CD4-positive, alpha-beta T cell (primary cell): ENCODE measurements at regions of chr3 and their contacts with region 1.

Region 1: GRCh38 chr3:52406231-52406661 is 38.7 kb downstream of the SEMA3G start:
- DNase-seq: peak in 2 of 14 experiments; percentile 1 to 7
- ATAC-seq: no peak
- H3K4me3 ChIP-seq: no peak overlapping the region
- H3K4me3 Mint-ChIP-seq: peak overlapping the region; percentile 38
- H3K27ac ChIP-seq: no peak overlapping the region
- H3K27ac Mint-ChIP-seq: no peak overlapping the region
- H3K4me1 ChIP-seq: peaks cover 39% of the 10 kb centered on the region
- H3K4me1 Mint-ChIP-seq: peaks cover 22% of the 10 kb centered on the region
- H3K27me3 ChIP-seq: no peaks in the 10 kb centered on the region
- H3K27me3 Mint-ChIP-seq: no peaks in the 10 kb centered on the region
- CTCF ChIP-seq: no peak

Region 2: GRCh38 chr3:52197842-52198668 is 208.2 kb before region 1 on chr3 and contains the start of gene ALAS1:
- CTCF ChIA-PET with region 1: no interaction called
- POLR2A ChIA-PET with region 1: no interaction called
- intact Hi-C with region 1: loop called in 1 of 2 experiments (anchors 2 kb)
- DNase-seq: peak; percentile 87 to 97 (median 94)
- ATAC-seq: peak; percentile 98
- H3K4me3 ChIP-seq: peak within 1 kb of the TSS; percentile 90
- H3K4me3 Mint-ChIP-seq: peak within 1 kb of the TSS; percentile 98
- H3K27ac ChIP-seq: peak within 1 kb of the TSS; percentile 70 to 73
- H3K27ac Mint-ChIP-seq: peak within 1 kb of the TSS; percentile 92
- H3K4me1 ChIP-seq: peaks cover 50% of the 10 kb centered on the region
- H3K4me1 Mint-ChIP-seq: peaks cover 51% of the 10 kb centered on the region
- H3K27me3 ChIP-seq: no peaks in the 10 kb centered on the region
- H3K27me3 Mint-ChIP-seq: no peaks in the 10 kb centered on the region
- CTCF ChIP-seq: no peak
- total RNA-seq, gene ALAS1: 6.0 to 7.0 TPM

Region 3: GRCh38 chr3:52238761-52239701 is 167.2 kb before region 1 on chr3 and contains the start of gene TWF2:
- CTCF ChIA-PET with region 1: no interaction called
- POLR2A ChIA-PET with region 1: no interaction called
- intact Hi-C with region 1: loop called in 1 of 2 experiments (anchors 5 kb)
- DNase-seq: peak; percentile 69 to 93 (median 84)
- ATAC-seq: peak; percentile 79
- H3K4me3 ChIP-seq: peak within 1 kb of the TSS; percentile 99
- H3K4me3 Mint-ChIP-seq: peak within 1 kb of the TSS; percentile 99
- H3K27ac ChIP-seq: peak within 1 kb of the TSS; percentile 81 to 95
- H3K27ac Mint-ChIP-seq: peak within 1 kb of the TSS; percentile 99
- H3K4me1 ChIP-seq: peaks cover 80% of the 10 kb centered on the region
- H3K4me1 Mint-ChIP-seq: peaks cover 86% of the 10 kb centered on the region
- H3K27me3 ChIP-seq: no peaks in the 10 kb centered on the region
- H3K27me3 Mint-ChIP-seq: no peaks in the 10 kb centered on the region
- CTCF ChIP-seq: peak; percentile 63
- total RNA-seq, gene TWF2: 17.4 to 21.7 TPM

Region 4: DNA sequence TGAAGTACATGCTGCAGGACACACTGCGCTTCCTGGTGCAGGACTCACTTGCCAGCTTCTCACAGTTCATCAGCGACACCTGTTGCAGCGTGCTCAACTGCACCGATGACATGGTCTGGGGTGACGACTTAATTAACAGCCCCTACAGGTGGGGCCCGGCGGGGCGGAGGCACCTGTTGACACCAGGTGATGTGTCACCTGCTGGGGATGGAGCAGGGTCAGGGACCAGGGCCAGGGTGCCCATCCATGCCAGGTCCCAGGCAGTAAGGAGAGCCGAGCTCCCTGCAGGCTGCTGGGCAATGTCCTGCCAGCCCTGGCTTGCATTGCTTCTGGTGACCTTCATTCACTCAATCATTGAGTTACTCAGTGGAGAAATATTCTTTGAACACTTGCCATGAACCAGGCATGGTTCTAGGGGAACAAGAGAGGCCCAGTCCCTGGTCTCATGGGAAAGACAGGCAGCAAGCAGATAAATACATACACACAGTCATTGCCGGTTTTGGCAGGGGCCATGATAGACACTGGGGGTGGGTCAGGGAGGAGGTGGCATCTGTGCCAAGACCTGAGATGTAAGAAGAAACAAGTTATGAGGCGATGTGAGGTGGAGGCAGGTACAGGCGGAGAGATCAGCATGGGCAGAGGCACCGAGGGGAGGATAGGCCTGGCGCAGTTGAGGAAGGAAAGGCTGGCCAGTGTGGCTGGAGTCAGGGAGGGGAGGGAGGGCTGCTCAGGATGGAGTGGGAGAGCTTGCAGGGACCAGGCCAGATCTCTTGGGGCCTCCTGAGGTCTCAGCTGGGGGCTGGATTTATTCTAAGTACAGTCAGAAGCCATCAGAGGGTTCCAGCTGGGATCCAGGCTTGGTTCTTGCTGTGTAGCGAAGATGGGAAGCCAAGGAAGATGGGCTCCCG is 59.4 kb before region 1 on chr3:
- CTCF ChIA-PET with region 1: no interaction called
- POLR2A ChIA-PET with region 1: no interaction called
- intact Hi-C with region 1: no loop called
- DNase-seq: no peak
- ATAC-seq: no peak
- H3K4me3 ChIP-seq: no peak overlapping the region
- H3K4me3 Mint-ChIP-seq: no peak overlapping the region
- H3K27ac ChIP-seq: no peak overlapping the region
- H3K27ac Mint-ChIP-seq: peak overlapping the region; percentile 25
- H3K4me1 ChIP-seq: no peaks in the 10 kb centered on the region
- H3K4me1 Mint-ChIP-seq: no peaks in the 10 kb centered on the region
- H3K27me3 ChIP-seq: no peaks in the 10 kb centered on the region
- H3K27me3 Mint-ChIP-seq: no peaks in the 10 kb centered on the region
- CTCF ChIP-seq: no peak

Region 5: DNA sequence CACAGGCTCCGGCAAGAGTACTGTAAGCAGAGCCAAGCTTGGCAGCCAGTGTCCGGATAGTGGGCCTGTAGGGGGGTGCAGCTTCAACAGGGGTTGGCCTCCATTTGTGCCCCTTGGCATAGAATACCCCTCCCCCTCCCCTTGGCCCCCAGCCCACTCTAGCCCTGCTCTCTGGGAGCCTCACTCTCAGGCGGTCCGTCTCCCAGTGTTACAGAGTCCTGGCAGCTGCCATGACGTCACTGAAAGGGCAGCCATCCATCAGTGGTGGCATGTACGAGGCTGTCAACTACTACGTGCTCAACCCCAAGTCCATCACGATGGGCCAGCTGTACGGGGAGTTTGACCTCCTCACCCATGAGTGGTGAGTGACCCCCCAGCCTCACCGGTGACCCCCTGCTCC is 39.7 kb before region 1 on chr3:
- CTCF ChIA-PET with region 1: no interaction called
- POLR2A ChIA-PET with region 1: no interaction called
- intact Hi-C with region 1: no loop called
- DNase-seq: no peak
- ATAC-seq: no peak
- H3K4me3 ChIP-seq: no peak overlapping the region
- H3K4me3 Mint-ChIP-seq: no peak overlapping the region
- H3K27ac ChIP-seq: no peak overlapping the region
- H3K27ac Mint-ChIP-seq: no peak overlapping the region
- H3K4me1 ChIP-seq: no peaks in the 10 kb centered on the region
- H3K4me1 Mint-ChIP-seq: no peaks in the 10 kb centered on the region
- H3K27me3 ChIP-seq: no peaks in the 10 kb centered on the region
- H3K27me3 Mint-ChIP-seq: no peaks in the 10 kb centered on the region
- CTCF ChIP-seq: no peak

Region 6: GRCh38 chr3:52471371-52472238 is 65.4 kb after region 1 on chr3:
- CTCF ChIA-PET with region 1: no interaction called
- POLR2A ChIA-PET with region 1: no interaction called
- intact Hi-C with region 1: no loop called
- DNase-seq: peak in 4 of 14 experiments; percentile 15 to 54 (median 32)
- ATAC-seq: peak; percentile 48
- H3K4me3 ChIP-seq: no peak overlapping the region
- H3K4me3 Mint-ChIP-seq: no peak overlapping the region
- H3K27ac ChIP-seq: no peak overlapping the region
- H3K27ac Mint-ChIP-seq: no peak overlapping the region
- H3K4me1 ChIP-seq: no peaks in the 10 kb centered on the region
- H3K4me1 Mint-ChIP-seq: peaks cover 5% of the 10 kb centered on the region
- H3K27me3 ChIP-seq: no peaks in the 10 kb centered on the region
- H3K27me3 Mint-ChIP-seq: no peaks in the 10 kb centered on the region
- CTCF ChIP-seq: peak; percentile 52

Region 7: DNA sequence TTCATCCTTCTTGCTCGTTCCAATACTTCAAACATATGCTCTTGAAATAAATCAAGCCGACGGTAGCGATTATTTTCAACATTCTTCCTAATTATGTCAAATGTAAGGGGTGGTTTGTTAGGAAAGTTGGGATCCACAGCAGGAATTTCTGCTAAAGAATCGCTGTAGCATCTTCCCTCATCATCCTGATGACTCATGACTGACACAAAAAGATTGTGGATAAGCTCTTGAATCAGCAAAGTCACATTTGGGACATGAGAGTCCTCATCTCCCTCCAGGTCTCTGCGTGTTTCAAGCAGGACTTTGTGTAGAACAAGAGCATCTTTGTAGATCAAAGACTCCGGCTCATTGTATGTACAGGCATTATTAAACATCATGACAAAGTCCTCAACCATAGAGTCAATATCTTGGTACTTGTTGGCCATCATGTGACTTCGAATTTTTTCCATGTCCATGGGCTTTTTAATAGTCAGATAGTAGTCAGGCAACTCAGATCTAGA is 203.1 kb after region 1 on chr3:
- CTCF ChIA-PET with region 1: no interaction called
- POLR2A ChIA-PET with region 1: no interaction called
- intact Hi-C with region 1: no loop called
- DNase-seq: no peak
- ATAC-seq: no peak
- H3K4me3 ChIP-seq: no peak overlapping the region
- H3K4me3 Mint-ChIP-seq: no peak overlapping the region
- H3K27ac ChIP-seq: no peak overlapping the region
- H3K27ac Mint-ChIP-seq: no peak overlapping the region
- H3K4me1 ChIP-seq: no peaks in the 10 kb centered on the region
- H3K4me1 Mint-ChIP-seq: peaks cover 13% of the 10 kb centered on the region
- H3K27me3 ChIP-seq: no peaks in the 10 kb centered on the region
- H3K27me3 Mint-ChIP-seq: no peaks in the 10 kb centered on the region
- CTCF ChIP-seq: no peak